ENCODE measurements at regions of chr15 and their contacts with region 1.

Region 1: DNA sequence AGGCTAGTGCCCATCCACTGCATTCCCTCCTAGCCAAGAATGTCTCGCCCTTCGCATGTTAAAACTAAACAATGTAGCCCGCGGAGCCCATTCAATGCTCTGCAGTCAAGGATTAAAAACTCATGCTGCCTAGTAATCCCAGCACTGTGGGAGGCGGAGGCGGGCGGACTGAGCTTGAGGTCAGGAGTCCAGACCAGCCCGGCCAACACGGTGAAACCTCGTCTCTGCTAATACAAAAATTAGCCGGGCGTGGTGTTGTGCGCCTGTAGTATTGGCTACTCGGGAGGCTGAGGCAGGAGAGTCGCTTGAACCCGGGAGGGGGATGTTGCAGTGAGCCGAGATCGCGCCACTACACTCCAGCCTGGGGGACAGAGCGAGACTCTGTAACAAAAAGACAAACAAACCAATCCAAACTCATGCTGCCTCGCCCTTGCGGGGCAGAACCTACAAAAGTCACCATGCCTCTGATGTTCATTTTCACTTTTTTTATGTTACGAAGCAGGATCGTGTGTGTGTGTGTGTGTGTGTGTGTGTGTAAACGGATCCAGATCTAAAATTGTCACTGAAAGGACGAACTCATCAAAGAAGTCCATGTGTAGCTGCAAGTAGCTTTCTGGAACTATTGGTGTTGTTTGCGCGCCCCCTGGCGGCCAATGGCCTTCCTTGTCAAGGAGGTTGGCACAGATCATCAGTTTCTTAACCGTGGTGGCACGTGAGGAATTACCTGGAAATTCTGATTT is 54.8 kb upstream of the SPESP1 start:
- DNase-seq: peak; percentile 83
- CTCF ChIP-seq: peak; percentile 92

Region 2: DNA sequence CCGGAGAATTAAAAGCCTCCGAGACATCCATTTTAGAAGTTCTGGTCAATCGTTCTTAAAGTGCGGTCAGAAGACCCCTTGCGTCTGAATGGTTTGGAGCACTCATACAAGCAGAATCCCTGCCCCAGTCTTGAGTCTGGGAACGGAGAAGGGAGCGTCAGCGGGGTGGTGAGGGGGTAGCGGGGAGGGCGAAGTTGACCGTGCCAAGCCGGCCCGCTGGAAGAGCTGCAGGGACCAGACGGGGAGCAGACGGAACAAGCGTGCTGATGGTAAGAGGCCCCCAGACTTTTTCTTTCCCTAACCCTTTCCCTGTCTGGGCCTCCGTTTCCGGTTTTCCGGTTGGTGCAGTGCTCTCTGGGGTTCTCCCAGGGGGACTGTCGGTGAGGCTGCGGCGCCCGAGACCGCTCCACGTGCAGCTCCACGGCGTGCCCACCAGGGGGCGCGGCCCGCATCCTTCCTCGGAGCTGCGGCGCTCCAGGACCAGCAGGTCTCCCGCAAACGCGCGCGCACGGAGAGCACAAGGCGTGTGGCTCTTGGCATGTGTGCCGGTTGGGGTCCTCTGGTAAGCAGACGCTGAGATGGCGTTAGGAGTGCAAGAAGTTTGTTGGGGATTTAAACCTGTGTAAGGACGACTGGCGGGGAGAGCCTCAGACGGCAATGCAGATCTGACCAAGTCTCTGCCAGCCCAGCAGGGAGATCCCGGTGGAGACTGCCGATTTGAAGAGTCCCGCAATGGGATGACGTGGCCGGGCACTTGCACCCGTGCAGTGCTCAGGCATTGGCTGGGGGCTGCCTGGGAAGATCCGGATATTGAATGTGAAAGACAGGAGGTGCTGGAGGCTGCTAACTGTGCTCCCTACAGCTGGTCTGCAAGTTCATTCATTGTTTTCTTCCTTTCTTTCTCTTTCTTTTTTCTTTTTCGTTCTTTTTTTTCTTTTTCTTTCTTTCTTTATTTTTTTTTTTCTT is 315.9 kb before region 1 on chr15:
- in situ Hi-C with region 1: loop called (anchors 25 kb)
- DNase-seq: peak; percentile 84
- CTCF ChIP-seq: peak; percentile 96

Region 3: GRCh38 chr15:69272139-69272538 is 396.6 kb after region 1 on chr15:
- in situ Hi-C with region 1: no loop called
- DNase-seq: no peak
- CTCF ChIP-seq: no peak

Measured in GM13977 (cell line).